Calu3 (cell line): ENCODE measurements at regions of chr16 and their contacts with region 1.

Region 1: GRCh38 chr16:71499775-71500364 is 10.7 kb upstream of the ZNF19 start:
- DNase-seq: peak; percentile 72
- H3K4me3 Mint-ChIP-seq: no peak overlapping the region
- H3K27ac Mint-ChIP-seq: no peak overlapping the region
- H3K4me1 Mint-ChIP-seq: peaks cover 2% of the 10 kb centered on the region
- H3K27me3 Mint-ChIP-seq: no peaks in the 10 kb centered on the region
- CTCF ChIP-seq: peak; percentile 77

Region 2: GRCh38 chr16:71412270-71413160 is 87.4 kb before region 1 on chr16:
- CTCF ChIA-PET with region 1: interaction called, 53 read pairs
- intact Hi-C with region 1: loop called (anchors 1 kb)
- DNase-seq: peak; percentile 86
- H3K4me3 Mint-ChIP-seq: peak overlapping the region; percentile 31
- H3K27ac Mint-ChIP-seq: no peak overlapping the region
- H3K4me1 Mint-ChIP-seq: no peaks in the 10 kb centered on the region
- H3K27me3 Mint-ChIP-seq: peaks cover 67% of the 10 kb centered on the region
- CTCF ChIP-seq: peak; percentile 68

Region 3: DNA sequence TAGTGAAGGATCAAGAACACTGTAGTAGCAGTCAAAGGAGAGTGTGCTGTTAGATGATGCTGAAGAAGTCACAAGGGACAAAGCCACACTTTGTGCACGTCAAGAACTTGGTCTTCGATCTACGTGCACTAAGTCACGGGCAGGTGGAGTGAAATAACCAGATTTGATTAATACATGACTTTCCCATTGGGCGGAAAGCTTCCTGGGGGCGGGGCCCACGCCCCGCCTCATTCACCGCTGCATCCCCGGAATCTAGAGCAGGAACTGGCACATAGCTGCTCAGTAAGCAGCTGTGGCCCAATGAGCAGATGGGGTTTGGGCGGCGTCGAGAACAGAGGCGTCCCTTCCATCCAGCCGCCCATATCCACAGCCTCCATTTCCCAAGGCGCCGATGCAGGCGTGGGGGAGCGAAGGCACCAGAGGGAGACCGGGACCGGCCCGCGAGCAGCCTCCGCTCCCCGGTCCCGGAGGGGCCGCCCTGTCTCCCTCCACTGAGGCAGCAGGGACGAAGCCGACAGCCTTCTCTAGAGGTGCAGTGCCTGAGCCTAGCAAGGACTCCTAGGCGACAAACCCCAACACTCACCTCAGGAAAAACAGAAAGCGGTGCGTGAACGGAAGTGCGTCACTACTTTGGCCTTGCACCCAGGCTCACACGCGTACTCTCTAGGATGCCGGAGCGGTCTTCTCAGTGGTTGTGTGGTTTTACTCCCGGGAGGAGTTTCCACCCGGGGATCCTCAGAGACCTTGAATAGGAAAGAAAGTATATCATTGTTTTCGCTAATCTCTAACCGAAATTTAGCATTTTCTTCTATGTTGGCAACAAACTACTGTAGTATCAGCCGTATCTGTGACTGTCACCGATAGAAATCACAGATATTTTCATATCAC is 15.6 kb before region 1 on chr16:
- CTCF ChIA-PET with region 1: interaction called, 10 read pairs
- intact Hi-C with region 1: no loop called
- DNase-seq: peak; percentile 86
- H3K4me3 Mint-ChIP-seq: peak overlapping the region; percentile 81
- H3K27ac Mint-ChIP-seq: peak overlapping the region; percentile 56
- H3K4me1 Mint-ChIP-seq: peaks cover 11% of the 10 kb centered on the region
- H3K27me3 Mint-ChIP-seq: no peaks in the 10 kb centered on the region
- CTCF ChIP-seq: no peak

Region 4: GRCh38 chr16:71515026-71515425 is 15.2 kb after region 1 on chr16:
- CTCF ChIA-PET with region 1: no interaction called
- intact Hi-C with region 1: no loop called
- DNase-seq: peak; percentile 93
- H3K4me3 Mint-ChIP-seq: peak overlapping the region; percentile 17
- H3K27ac Mint-ChIP-seq: peak overlapping the region; percentile 82
- H3K4me1 Mint-ChIP-seq: peaks cover 65% of the 10 kb centered on the region
- H3K27me3 Mint-ChIP-seq: no peaks in the 10 kb centered on the region
- CTCF ChIP-seq: no peak

Region 5: GRCh38 chr16:71526111-71526631 is 26.3 kb after region 1 on chr16 and contains the start of gene CHST4:
- CTCF ChIA-PET with region 1: interaction called, 16 read pairs
- intact Hi-C with region 1: no loop called
- DNase-seq: peak; percentile 82
- H3K4me3 Mint-ChIP-seq: peak within 1 kb of the TSS; percentile 81
- H3K27ac Mint-ChIP-seq: peak within 1 kb of the TSS; percentile 96
- H3K4me1 Mint-ChIP-seq: peaks cover 61% of the 10 kb centered on the region
- H3K27me3 Mint-ChIP-seq: no peaks in the 10 kb centered on the region
- CTCF ChIP-seq: no peak
- total RNA-seq, gene CHST4: 72.9 and 105 TPM in 2 replicates

Region 6: DNA sequence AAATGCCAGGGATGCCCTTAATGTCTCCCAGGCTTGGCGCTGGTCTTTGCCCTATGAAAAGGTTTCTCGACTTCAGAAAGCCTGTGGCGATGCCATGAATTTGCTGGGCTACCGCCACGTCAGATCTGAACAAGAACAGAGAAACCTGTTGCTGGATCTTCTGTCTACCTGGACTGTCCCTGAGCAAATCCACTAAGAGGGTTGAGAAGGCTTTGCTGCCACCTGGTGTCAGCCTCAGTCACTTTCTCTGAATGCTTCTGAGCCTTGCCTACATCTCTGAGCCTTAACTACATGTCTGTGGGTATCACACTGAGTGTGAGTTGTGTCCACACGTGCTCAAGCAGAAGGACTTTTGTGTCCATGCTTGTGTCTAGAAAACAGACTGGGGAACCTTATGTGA is 37.8 kb after region 1 on chr16:
- CTCF ChIA-PET with region 1: interaction called, 10 read pairs
- intact Hi-C with region 1: loop called (anchors 1 kb)
- DNase-seq: peak; percentile 78
- H3K4me3 Mint-ChIP-seq: no peak overlapping the region
- H3K27ac Mint-ChIP-seq: no peak overlapping the region
- H3K4me1 Mint-ChIP-seq: peaks cover 22% of the 10 kb centered on the region
- H3K27me3 Mint-ChIP-seq: no peaks in the 10 kb centered on the region
- CTCF ChIP-seq: peak; percentile 72